ENCODE measurements at regions of chr9 and their contacts with region 1.

Region 1: DNA sequence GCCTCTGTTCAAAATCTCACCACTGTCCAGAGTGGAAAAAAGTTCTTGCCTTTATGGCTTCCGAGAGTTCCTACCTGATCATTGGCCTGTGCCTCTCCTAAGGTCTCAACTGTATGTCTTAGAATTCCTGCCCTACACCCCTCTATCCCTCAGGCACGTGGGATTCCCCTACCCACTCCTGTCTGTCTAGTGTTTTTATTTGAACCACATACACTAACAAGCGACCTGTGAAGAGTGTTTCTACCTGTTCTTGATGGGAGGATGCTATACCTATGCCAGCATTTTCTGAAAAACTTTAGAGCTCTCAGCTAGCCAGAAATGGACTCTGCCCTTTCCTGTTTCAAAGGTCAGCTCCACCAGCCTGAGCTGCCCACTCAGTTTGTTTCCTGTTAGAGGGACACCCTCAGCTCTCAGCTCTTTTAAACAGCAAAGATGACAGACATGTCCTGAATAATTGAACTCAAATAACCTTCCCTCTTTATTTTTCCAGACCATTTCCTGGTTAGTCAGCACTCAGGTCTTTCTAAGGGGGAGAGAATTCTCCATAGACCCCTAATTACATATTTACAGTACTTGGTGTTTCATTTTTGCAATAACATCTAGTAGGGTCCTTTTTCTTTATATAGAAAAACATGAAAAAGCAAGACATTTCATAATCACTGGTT is 214.8 kb downstream of the AOPEP start:
- DNase-seq: peak; percentile 94
- ATAC-seq: peak; percentile 96
- H3K4me3 ChIP-seq: no peak overlapping the region; a peak in 1 of 6 replicates
- H3K27ac ChIP-seq: peak overlapping the region; percentile 87
- H3K4me1 ChIP-seq: peaks cover 62% of the 10 kb centered on the region
- H3K27me3 ChIP-seq: no peaks in the 10 kb centered on the region
- CTCF ChIP-seq: no peak
- EP300 ChIP-seq: peak in 1 of 2 experiments; percentile 88; a peak in 2 of 4 replicates
- POLR2A ChIP-seq: no peak
- RAD21 ChIP-seq: no peak

Region 2: GRCh38 chr9:94110821-94111252 is 830.5 kb before region 1 on chr9:
- CTCF ChIA-PET with region 1: no interaction called
- POLR2A ChIA-PET with region 1: no interaction called
- in situ Hi-C with region 1: no loop called
- intact Hi-C with region 1: no loop called
- DNase-seq: no peak
- ATAC-seq: no peak
- H3K4me3 ChIP-seq: no peak overlapping the region
- H3K27ac ChIP-seq: no peak overlapping the region
- H3K4me1 ChIP-seq: no peaks in the 10 kb centered on the region
- H3K27me3 ChIP-seq: no peaks in the 10 kb centered on the region
- CTCF ChIP-seq: no peak
- EP300 ChIP-seq: no peak
- POLR2A ChIP-seq: no peak
- RAD21 ChIP-seq: no peak

Region 3: DNA sequence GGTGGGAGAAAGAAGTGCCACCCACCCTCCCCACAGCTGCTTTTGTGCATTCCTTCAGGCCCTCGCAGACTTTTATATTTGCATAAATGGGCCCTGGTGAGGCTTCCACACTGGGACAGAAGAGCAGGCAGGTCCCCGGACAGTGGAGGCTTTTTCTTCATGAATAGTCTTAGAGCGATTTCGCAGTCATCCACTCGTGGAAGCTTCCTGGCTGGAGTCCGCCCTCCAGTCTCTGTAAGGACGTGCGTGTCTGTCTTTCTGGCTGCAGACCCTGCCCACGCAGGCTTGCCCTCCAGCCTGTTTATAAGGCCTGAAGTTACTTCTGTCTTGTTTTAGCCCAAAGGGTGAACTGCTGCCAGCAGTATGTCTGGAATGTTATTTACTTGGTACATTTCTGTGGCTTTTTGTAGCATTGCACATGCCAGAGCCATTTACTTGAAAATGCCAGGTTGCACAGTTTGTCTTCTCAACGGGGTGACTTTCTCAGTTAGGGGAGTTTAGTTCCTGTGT is 19.2 kb before region 1 on chr9:
- CTCF ChIA-PET with region 1: no interaction called
- POLR2A ChIA-PET with region 1: interaction called, 11 read pairs
- in situ Hi-C with region 1: no loop called
- intact Hi-C with region 1: loop called (anchors 1 kb)
- DNase-seq: peak; percentile 91
- ATAC-seq: peak; percentile 89
- H3K4me3 ChIP-seq: peak overlapping the region in 1 of 3 experiments; percentile 45; a peak in 2 of 6 replicates
- H3K27ac ChIP-seq: peak overlapping the region; percentile 84
- H3K4me1 ChIP-seq: peaks cover 91% of the 10 kb centered on the region
- H3K27me3 ChIP-seq: no peaks in the 10 kb centered on the region
- CTCF ChIP-seq: no peak
- EP300 ChIP-seq: peak in 1 of 2 experiments; percentile 79; a peak in 3 of 4 replicates
- POLR2A ChIP-seq: peak in 1 of 2 experiments; percentile 40; a peak in 1 of 4 replicates
- RAD21 ChIP-seq: no peak

Measured in HepG2 (cell line).